PC-3 (cell line): ENCODE measurements at regions of chr13 and their contacts with region 1.

Region 1: DNA sequence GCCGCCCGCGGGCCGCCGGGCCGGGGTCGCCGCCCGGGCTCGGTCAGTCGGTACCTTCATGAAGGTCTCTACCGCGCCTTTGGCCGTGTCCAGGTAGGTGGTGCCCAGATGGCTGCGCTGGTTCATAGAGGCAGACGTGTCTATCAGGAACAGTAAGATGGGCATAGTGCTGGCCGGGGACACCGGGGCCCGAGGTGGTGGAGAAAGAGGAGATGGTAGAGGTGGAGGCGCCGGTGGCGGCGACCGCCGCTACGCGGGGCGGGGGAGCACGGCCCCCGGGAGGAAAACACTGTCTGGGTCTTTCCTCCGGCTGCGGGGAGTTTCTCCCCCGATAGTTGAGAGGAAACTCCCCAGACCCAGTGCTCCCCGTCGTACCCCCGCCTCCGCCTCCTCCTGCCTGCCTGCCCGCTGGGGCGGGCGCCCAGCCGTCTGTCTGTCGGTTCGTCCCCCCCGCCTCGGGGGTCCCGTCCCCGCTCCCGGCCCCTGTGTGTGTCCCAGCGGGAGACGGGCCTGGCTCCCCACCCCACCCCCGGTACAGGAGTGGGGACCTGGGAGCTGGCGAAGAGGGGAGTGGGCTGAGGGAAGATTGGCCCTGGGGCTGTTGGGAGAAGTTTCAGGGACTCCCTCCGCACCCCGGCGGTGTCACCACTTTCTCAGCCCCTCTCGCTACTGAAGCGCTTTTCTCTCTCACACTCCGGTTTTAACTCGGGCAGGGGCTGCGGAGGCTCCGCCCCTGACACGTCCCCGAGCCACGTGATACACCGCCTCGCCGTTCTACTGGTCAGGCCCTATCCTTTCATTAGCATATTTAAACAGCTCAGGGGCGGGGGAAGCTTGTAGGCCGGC is at the start of gene INTS6:
- DNase-seq: peak; percentile 96
- ATAC-seq: peak; percentile 88
- H3K4me3 ChIP-seq: peak within 1 kb of the TSS; percentile 94
- H3K27ac ChIP-seq: peak within 1 kb of the TSS; percentile 81
- H3K4me1 ChIP-seq: peaks cover 23% of the 10 kb centered on the region
- H3K27me3 ChIP-seq: no peaks in the 10 kb centered on the region
- CTCF ChIP-seq: no peak
- total RNA-seq, gene INTS6: 19.9 and 26.6 TPM in 2 replicates

Region 2: DNA sequence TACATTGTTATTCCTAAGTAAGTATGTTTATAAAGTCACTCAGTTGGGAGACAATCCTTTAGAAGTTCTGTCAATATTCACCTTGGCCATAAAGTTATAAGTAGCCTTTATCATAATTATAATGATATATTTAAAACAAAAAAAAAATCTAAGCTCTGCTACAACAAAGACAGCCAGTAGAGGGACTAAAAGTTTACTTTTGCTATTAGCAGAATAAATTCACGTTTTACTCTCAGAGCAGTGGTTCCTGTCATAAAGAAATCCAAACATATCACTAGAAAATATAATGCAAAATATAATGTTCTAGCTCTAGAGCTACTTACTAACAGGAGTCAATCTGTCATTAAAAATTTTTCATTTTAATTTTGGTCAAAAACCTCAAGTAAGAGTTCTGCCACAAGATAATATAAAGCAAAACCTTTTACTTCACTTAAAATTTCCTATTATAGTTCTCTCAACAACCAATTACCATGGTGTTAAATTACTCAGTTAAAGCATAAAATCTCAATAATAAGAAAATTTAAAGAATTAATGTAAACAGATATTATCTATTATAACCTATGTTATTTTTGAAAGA is 17.5 kb before region 1 on chr13:
- CTCF ChIA-PET with region 1: no interaction called
- POLR2A ChIA-PET with region 1: interaction called, 10 read pairs
- intact Hi-C with region 1: no loop called
- DNase-seq: peak; percentile 50
- ATAC-seq: no peak; the same call in 1 of the 2 replicates
- H3K4me3 ChIP-seq: no peak overlapping the region
- H3K27ac ChIP-seq: no peak overlapping the region
- H3K4me1 ChIP-seq: no peaks in the 10 kb centered on the region
- H3K27me3 ChIP-seq: no peaks in the 10 kb centered on the region
- CTCF ChIP-seq: peak; percentile 54

Region 3: GRCh38 chr13:51523082-51523518 is 70.5 kb after region 1 on chr13:
- CTCF ChIA-PET with region 1: no interaction called
- POLR2A ChIA-PET with region 1: interaction called, 11 read pairs
- intact Hi-C with region 1: loop called (anchors 5 kb)
- DNase-seq: peak; percentile 72
- ATAC-seq: peak; percentile 10; the same call in 1 of the 2 replicates
- H3K4me3 ChIP-seq: no peak overlapping the region
- H3K27ac ChIP-seq: peak overlapping the region; percentile 93
- H3K4me1 ChIP-seq: peaks cover 62% of the 10 kb centered on the region
- H3K27me3 ChIP-seq: no peaks in the 10 kb centered on the region
- CTCF ChIP-seq: no peak

Region 4: GRCh38 chr13:51564252-51564651 is 111.7 kb after region 1 on chr13:
- CTCF ChIA-PET with region 1: no interaction called
- POLR2A ChIA-PET with region 1: no interaction called
- intact Hi-C with region 1: no loop called
- DNase-seq: peak; percentile 7
- ATAC-seq: no peak
- H3K4me3 ChIP-seq: no peak overlapping the region
- H3K27ac ChIP-seq: no peak overlapping the region
- H3K4me1 ChIP-seq: no peaks in the 10 kb centered on the region
- H3K27me3 ChIP-seq: no peaks in the 10 kb centered on the region
- CTCF ChIP-seq: no peak